ENCODE measurements at regions of chr12 and their contacts with region 1.

Region 1: GRCh38 chr12:93098077-93098476 is 169.0 kb upstream of the EEA1 start:
- DNase-seq: no peak
- CTCF ChIP-seq: peak; percentile 53

Region 2: DNA sequence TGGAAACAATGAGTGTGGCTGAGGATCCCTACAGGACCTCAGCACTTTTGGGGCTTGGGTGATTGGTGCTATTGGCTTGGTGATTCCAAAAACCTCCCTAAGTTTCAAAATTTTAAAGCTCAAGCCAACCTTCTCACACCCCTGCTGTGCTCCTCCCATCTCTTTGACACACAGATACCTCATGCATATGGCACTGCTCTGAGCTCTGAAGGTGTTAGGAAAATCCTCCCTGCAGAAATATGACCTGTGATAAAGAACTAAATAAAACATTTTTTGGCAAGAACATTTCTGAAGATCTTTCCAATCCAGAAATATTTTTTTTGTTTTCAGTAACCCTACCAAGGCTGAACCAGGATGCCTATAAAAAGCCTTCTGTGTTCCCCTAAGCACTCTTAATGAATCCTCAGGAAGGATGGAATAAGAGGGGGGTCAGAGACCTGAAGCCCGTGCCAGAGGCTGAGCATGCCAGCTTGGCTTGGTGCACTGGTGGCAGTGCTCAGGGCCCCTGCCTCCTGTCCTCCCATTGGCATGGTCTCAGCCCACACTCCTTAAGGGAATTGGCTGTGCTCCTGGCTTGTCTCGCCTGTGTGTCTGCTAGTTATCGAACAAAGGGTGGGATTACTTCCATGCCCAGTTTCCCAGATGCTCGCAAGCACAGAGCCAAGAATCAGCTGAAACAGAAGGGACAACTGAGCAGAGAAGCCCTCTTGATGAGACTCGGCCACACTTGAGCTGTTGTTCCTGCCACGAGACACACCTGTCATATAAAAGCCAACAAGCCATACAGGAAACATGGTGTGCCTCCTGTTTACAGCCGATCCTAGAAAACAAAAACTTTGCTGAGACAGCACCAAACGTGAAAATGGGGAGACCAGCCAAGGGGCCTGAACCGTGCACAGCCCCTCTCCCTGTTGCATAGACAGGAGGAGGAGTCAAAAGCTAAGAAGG is 36.3 kb before region 1 on chr12:
- CTCF ChIA-PET with region 1: interaction called, 16 read pairs
- POLR2A ChIA-PET with region 1: interaction called, 4 read pairs
- DNase-seq: no peak
- CTCF ChIP-seq: no peak

Region 3: GRCh38 chr12:93109551-93110203 is 11.6 kb after region 1 on chr12:
- CTCF ChIA-PET with region 1: interaction called, 130 read pairs
- POLR2A ChIA-PET with region 1: no interaction called
- DNase-seq: peak; percentile 36
- CTCF ChIP-seq: no peak

Region 4: DNA sequence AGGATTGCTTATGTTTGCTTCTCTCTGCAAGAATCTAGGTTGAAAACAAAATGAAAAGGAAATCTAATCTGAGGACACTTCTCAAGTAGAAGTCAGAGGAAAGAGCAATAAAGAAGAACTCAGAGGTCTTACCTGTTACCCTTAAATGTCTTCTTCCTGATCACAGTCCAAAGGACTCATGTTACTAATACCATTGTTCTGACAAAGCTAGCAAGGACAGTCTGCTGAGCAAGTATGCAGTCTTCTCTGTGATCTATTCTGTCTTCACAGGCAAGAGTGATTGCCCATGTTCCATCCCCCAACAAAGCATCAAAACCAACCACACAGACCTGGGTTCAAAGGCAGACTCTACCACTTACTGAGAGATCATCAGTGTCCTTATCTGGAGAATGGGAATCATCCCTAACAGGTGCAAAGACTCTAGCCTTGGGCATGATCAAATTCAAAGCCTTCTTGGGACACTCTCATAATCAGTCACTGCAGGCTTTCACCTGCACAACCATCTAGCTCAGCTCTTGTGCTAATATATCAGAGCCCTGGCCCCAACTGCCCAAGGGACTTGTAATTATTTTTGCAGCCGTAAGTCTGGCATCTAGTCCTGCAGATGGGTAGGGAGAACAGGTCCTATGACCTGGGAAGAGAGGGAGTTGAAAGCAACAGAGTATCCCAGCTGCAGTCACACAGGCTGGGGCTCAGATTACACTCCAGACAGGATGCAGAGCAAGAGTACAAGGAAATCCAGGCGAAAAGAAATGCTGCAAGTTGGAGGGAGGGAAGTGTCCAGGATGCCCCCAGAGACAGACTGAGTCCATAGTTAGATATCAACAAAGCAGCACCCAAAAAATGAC is 181.7 kb after region 1 on chr12:
- CTCF ChIA-PET with region 1: no interaction called
- POLR2A ChIA-PET with region 1: no interaction called
- DNase-seq: no peak
- CTCF ChIP-seq: no peak

Region 5: GRCh38 chr12:93378373-93379325 is 280.6 kb after region 1 on chr12:
- CTCF ChIA-PET with region 1: interaction called, 18 read pairs
- POLR2A ChIA-PET with region 1: no interaction called
- DNase-seq: peak; percentile 59
- CTCF ChIP-seq: no peak

Region 6: DNA sequence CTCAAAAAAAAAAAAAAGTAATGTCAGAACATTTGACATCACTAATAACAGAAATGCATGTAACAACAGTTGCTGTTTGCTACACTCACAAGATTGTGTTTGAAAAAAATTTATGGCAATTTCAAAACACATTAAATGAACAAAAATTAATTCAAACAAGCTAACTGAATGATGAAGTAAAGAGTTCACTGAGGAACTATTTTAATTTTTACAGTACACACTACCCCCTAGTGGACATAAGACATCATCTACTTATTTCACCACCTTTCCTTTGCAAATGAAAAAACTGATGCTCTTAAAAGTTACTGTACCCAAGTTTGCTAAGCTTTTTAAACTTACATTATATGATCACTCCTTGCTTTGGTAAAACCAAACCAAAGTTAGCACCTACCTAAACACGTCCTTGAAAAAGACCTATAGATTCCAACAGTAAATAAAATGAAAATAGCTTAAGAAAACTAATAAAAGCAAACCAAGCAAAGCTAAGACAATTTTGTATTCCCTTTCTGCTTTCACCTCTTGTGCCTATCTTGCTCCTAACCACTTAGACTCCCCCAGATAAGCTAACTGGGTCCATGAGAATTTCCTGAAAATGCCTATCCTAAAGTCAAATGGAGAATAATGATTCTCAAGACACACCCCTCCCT is 321.4 kb after region 1 on chr12:
- CTCF ChIA-PET with region 1: interaction called, 18 read pairs
- POLR2A ChIA-PET with region 1: no interaction called
- DNase-seq: peak; percentile 27
- CTCF ChIP-seq: peak; percentile 53

Measured in GM10248 (cell line).